ENCODE measurements at regions of chr1 and their contacts with region 1.

Region 1: GRCh38 chr1:185566995-185567394 is 167.2 kb upstream of the HMCN1 start:
- DNase-seq: peak; percentile 25 to 69
- H3K4me3 ChIP-seq: no peak overlapping the region
- H3K27ac ChIP-seq: no peak overlapping the region
- H3K4me1 ChIP-seq: no peaks in the 10 kb centered on the region
- H3K27me3 ChIP-seq: no peaks in the 10 kb centered on the region
- CTCF ChIP-seq: no peak

Region 2: DNA sequence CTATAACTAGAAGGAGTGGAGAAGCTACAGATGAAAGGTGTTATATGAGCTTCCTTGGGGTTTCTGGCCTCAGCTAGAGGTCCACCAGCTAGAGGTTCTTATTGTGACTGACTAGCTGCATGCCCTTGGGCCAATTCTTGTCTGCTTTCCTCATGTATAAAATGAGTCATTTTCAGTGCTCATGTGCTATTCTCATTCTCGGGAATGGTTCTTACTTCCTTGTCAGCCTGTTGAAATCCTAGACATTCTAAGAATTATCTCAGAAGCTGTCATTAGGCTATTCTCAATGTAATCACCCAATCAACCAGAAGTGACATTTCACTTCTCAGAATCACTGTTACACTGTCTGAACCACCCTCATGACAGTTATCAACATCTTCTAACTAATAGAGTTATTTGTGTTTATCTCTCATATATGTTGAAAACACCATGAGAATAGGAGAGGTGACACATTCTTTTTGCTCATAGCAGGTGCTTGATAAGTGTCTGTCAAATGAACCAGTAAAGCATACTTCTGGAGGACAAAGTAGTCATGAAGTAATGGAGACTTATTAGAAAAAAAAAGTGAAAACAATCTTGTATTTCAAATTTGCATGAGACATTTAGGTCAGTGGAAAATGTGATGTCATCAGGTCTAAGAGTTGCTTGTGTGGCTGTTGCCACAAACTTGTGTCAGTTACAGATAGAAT is 127.1 kb before region 1 on chr1:
- CTCF ChIA-PET with region 1: no interaction called
- POLR2A ChIA-PET with region 1: no interaction called
- intact Hi-C with region 1: loop called (anchors 1 kb)
- DNase-seq: peak; percentile 70 to 86
- H3K4me3 ChIP-seq: no peak overlapping the region
- H3K27ac ChIP-seq: 0 out of 2 replicates have a peak overlapping the region, but pooled peaks have one; percentile 2
- H3K4me1 ChIP-seq: peaks cover 16% of the 10 kb centered on the region
- H3K27me3 ChIP-seq: no peaks in the 10 kb centered on the region
- CTCF ChIP-seq: no peak

Region 3: DNA sequence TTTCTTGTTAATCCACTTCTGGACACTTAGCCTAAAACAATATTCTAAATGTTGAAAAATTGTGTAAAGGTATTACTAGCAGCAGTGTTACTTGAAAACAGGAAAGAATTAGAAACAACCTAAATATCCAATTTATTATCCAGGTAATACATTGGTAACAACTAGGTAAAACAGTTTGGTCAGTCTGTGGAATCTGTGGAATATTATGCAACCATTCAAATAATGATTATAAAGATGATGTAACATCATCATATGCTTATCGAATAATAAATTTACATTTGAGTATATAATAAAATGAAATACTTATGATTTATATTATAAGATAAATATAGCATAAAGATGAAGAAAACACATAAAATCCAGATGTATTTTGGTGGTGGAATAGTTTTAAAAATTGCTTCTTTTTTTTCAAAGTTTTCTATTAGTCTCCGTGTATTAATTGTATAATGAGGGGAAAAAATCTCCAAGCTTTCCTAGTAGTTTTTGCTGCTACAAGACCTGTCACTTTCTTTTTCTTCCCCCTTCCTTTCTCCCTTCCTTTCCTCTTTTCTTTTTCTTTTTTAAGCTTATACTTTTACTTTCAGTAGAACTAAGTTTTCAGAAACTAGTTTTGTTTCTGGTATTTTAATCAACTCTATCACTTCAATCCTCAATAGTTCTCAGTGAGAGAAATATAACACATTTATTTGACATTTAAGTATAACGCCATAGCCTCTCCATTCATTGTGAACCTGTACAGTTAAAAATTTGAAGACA is 30.7 kb before region 1 on chr1:
- CTCF ChIA-PET with region 1: no interaction called
- POLR2A ChIA-PET with region 1: interaction called, 13 read pairs
- intact Hi-C with region 1: no loop called
- DNase-seq: no peak
- H3K4me3 ChIP-seq: no peak overlapping the region
- H3K27ac ChIP-seq: no peak overlapping the region
- H3K4me1 ChIP-seq: no peaks in the 10 kb centered on the region
- H3K27me3 ChIP-seq: no peaks in the 10 kb centered on the region
- CTCF ChIP-seq: no peak

Region 4: DNA sequence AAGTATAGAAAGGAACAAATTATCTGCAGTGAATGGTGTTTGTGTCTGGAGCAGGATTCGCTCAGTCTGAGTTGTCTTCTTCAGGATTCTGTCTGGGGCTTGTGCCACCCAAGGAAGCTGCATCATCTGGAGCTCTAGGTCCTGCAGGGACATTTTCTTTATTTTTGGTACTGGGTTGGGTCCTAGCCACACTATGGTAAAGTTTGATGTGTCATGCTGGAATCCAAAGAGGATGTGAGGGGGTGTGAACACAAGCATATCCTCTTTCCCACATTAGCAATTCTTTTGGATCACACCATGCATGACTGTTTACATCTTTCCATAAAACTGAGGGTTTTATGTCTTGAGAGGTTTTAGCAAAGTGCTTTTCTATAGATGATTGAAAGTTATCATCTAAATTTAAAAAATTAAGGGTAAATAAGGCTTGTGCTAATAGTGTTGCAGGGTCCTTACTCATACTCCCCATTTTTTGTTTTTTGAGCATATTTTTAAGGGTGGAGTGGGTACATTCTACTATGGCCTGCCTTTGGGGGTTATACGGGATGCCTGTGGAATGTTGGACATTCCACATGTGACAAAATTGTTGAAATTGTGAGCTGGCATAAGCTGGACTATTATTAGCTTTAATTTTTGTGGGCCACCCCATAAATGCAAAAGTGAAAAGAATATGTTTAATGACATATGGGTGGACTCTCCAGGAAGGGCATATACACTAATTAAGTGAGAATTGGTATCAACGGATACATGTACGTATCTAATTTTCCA is 15.1 kb after region 1 on chr1:
- CTCF ChIA-PET with region 1: no interaction called
- POLR2A ChIA-PET with region 1: no interaction called
- intact Hi-C with region 1: no loop called
- DNase-seq: no peak
- H3K4me3 ChIP-seq: no peak overlapping the region
- H3K27ac ChIP-seq: no peak overlapping the region
- H3K4me1 ChIP-seq: no peaks in the 10 kb centered on the region
- H3K27me3 ChIP-seq: no peaks in the 10 kb centered on the region
- CTCF ChIP-seq: no peak

Region 5: GRCh38 chr1:185595835-185596667 is 29.1 kb after region 1 on chr1:
- CTCF ChIA-PET with region 1: interaction called, 3 read pairs
- POLR2A ChIA-PET with region 1: interaction called, 6 read pairs
- intact Hi-C with region 1: loop called (anchors 2 kb)
- DNase-seq: peak in 1 of 2 experiments; percentile 52
- H3K4me3 ChIP-seq: no peak overlapping the region
- H3K27ac ChIP-seq: no peak overlapping the region
- H3K4me1 ChIP-seq: no peaks in the 10 kb centered on the region
- H3K27me3 ChIP-seq: no peaks in the 10 kb centered on the region
- CTCF ChIP-seq: peak; percentile 82

Region 6: GRCh38 chr1:185646202-185646683 is 79.2 kb after region 1 on chr1:
- CTCF ChIA-PET with region 1: no interaction called
- POLR2A ChIA-PET with region 1: interaction called, 7 read pairs
- intact Hi-C with region 1: loop called (anchors 1 kb)
- DNase-seq: peak; percentile 74 to 78
- H3K4me3 ChIP-seq: no peak overlapping the region
- H3K27ac ChIP-seq: peak overlapping the region; percentile 11; the same call in 1 of the 2 replicates
- H3K4me1 ChIP-seq: peaks cover 16% of the 10 kb centered on the region; the same call in 1 of the 2 replicates
- H3K27me3 ChIP-seq: no peaks in the 10 kb centered on the region
- CTCF ChIP-seq: no peak